Activated CD4-positive, alpha-beta memory T cell treated with anti-CD3 and anti-CD28 coated beads for 36 hours (primary cell): ENCODE measurements at regions of chr9 and their contacts with region 1.

Region 1: GRCh38 chr9:87707805-87708506 is 18.0 kb upstream of the CTSL start:
- DNase-seq: no peak
- H3K4me3 Mint-ChIP-seq: no peak overlapping the region
- H3K27ac Mint-ChIP-seq: no peak overlapping the region
- H3K4me1 Mint-ChIP-seq: peaks cover 34% of the 10 kb centered on the region
- H3K27me3 Mint-ChIP-seq: peaks cover 2% of the 10 kb centered on the region

Region 2: DNA sequence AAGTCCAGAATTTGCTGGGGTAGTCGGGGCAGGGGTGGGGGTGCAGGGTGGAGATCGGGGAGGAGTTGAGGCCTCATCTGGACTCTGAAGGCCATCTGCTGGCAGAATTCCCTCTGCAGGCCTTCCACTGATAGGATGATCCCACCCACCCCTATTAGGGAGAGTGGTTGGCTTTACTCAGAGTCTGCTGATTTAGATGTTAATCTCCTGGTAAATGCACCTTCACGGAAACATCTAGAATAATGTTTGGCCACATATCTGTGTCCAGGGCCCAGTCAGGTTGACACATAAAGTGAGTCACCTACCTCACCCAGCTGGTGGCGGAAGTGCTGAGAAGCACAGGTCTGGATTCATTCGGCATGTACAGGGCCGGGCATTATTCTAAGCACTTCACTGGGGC is 160.3 kb before region 1 on chr9:
- CTCF ChIA-PET with region 1: no interaction called
- POLR2A ChIA-PET with region 1: no interaction called
- intact Hi-C with region 1: no loop called
- DNase-seq: no peak
- H3K4me3 Mint-ChIP-seq: no peak overlapping the region
- H3K27ac Mint-ChIP-seq: no peak overlapping the region
- H3K4me1 Mint-ChIP-seq: no peaks in the 10 kb centered on the region
- H3K27me3 Mint-ChIP-seq: peaks cover 7% of the 10 kb centered on the region

Region 3: DNA sequence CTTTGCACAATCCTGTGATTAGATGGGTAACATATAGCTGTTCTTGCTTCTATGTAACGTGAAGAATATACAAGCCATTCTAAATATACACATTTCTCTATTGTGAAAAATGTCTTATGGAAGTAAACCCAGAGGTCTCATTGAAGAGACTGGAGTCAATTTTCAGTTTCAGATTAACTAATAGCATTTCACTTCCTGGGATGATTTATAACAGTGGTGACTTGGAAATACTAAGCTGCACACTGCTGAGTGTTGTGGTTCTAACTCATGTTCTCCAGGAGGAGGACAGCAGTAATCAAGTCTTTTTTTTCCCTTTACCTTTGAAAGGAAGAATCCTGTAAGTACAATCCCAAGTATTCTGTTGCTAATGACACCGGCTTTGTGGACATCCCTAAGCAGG is 21.3 kb after region 1 on chr9:
- CTCF ChIA-PET with region 1: no interaction called
- POLR2A ChIA-PET with region 1: interaction called, 3 read pairs
- intact Hi-C with region 1: loop called (anchors 2 kb)
- DNase-seq: no peak
- H3K4me3 Mint-ChIP-seq: no peak overlapping the region
- H3K27ac Mint-ChIP-seq: no peak overlapping the region
- H3K4me1 Mint-ChIP-seq: peaks cover 31% of the 10 kb centered on the region
- H3K27me3 Mint-ChIP-seq: peaks cover 15% of the 10 kb centered on the region

Region 4: DNA sequence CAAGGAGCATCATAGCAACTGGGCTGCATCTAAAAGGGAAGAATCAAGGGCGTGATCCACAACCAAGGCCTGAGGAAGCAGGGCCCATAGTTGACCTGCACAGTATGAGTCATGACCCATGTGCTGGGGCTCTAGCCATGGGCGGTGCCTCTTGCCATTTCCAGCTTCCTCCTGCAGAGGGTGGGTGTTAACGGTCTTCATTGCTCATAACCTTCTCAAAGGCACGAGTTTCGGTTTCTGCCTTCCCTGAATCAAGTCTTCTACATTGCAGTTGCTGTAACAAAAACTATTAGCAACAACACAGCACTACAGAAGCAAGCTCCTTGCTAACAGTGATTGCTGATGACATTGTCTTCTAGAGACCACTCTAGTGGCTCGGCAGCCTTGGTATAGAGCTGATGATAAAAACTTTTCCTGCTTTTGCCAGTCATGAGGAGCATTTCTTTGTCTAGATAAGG is 84.9 kb after region 1 on chr9:
- CTCF ChIA-PET with region 1: interaction called, 3 read pairs
- POLR2A ChIA-PET with region 1: no interaction called
- intact Hi-C with region 1: loop called (anchors 1 kb)
- DNase-seq: peak; percentile 83
- H3K4me3 Mint-ChIP-seq: peak overlapping the region; percentile 4
- H3K27ac Mint-ChIP-seq: peak overlapping the region; percentile 75
- H3K4me1 Mint-ChIP-seq: peaks cover 46% of the 10 kb centered on the region
- H3K27me3 Mint-ChIP-seq: no peaks in the 10 kb centered on the region